Right lobe of liver (tissue), 6 donors: ENCODE measurements at regions of chr5 and their contacts with region 1.

Region 1: DNA sequence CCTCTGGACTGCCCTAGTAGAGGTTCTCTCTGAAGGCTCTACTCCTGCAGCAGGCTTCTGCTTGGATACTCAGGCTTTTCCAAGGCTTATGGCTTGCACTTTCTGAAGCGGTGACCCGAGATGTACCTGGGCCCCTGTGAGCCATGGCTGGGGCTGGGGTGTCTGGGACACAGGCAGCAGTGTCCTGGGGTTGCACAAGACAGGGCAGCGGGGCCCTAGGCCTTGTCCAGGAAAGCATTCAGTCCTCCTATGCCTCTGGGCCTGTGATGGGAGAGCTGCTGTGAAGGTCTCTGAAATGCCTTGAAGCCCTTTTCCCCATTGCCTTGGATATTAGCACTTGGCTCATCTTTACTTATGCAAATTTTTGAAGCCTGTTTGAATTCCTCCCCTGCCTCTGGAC is 192.2 kb downstream of the YTHDC2 start:
- DNase-seq: no peak
- ATAC-seq: no peak
- H3K4me3 ChIP-seq: no peak overlapping the region
- H3K27ac ChIP-seq: no peak overlapping the region
- H3K4me1 ChIP-seq: no peaks in the 10 kb centered on the region
- H3K27me3 ChIP-seq: no peaks in the 10 kb centered on the region
- CTCF ChIP-seq: no peak
- POLR2A ChIP-seq: no peak

Region 2: GRCh38 chr5:113675166-113675565 is 30.5 kb before region 1 on chr5:
- intact Hi-C with region 1: no loop called
- DNase-seq: no peak
- ATAC-seq: no peak
- H3K4me3 ChIP-seq: no peak overlapping the region
- H3K27ac ChIP-seq: no peak overlapping the region
- H3K4me1 ChIP-seq: no peaks in the 10 kb centered on the region
- H3K27me3 ChIP-seq: no peaks in the 10 kb centered on the region
- CTCF ChIP-seq: no peak
- POLR2A ChIP-seq: no peak

Region 3: GRCh38 chr5:113917997-113918396 is 212.3 kb after region 1 on chr5:
- intact Hi-C with region 1: no loop called
- DNase-seq: no peak
- ATAC-seq: no peak
- H3K4me3 ChIP-seq: no peak overlapping the region
- H3K27ac ChIP-seq: no peak overlapping the region
- H3K4me1 ChIP-seq: no peaks in the 10 kb centered on the region
- H3K27me3 ChIP-seq: no peaks in the 10 kb centered on the region
- CTCF ChIP-seq: no peak
- POLR2A ChIP-seq: no peak

Region 4: GRCh38 chr5:113990581-113990980 is 284.9 kb after region 1 on chr5:
- intact Hi-C with region 1: loop called in 1 of 2 experiments (anchors 5 kb)
- DNase-seq: no peak
- ATAC-seq: no peak
- H3K4me3 ChIP-seq: no peak overlapping the region
- H3K27ac ChIP-seq: no peak overlapping the region
- H3K4me1 ChIP-seq: no peaks in the 10 kb centered on the region
- H3K27me3 ChIP-seq: no peaks in the 10 kb centered on the region
- CTCF ChIP-seq: no peak
- POLR2A ChIP-seq: no peak